CD14-positive monocyte (primary cell): ENCODE measurements at regions of chr2 and their contacts with region 1.

Region 1: GRCh38 chr2:219388127-219388844 is 574 bp upstream of the DNPEP start:
- DNase-seq: peak; percentile 92 to 98 (median 97)
- H3K4me3 ChIP-seq: peak overlapping the region in 2 of 3 experiments; percentile 15 to 60
- H3K4me3 Mint-ChIP-seq: peak overlapping the region; percentile 63 to 77
- H3K27ac ChIP-seq: peak overlapping the region in 1 of 2 donors; percentile 41
- H3K27ac Mint-ChIP-seq: peak overlapping the region; percentile 65 to 98 (median 93)
- H3K4me1 ChIP-seq: peaks cover 14 to 19% of the 10 kb centered on the region in 2 donors
- H3K4me1 Mint-ChIP-seq: peaks cover 21% of the 10 kb centered on the region
- H3K27me3 ChIP-seq: peaks cover 0 to 6% of the 10 kb centered on the region in 2 donors
- H3K27me3 Mint-ChIP-seq: peaks cover 6 to 12% (median 7%) of the 10 kb centered on the region in 3 donors
- CTCF ChIP-seq: peak; percentile 58

Region 2: GRCh38 chr2:219160186-219161017 is 227.9 kb before region 1 on chr2 and contains the start of gene NHEJ1:
- intact Hi-C with region 1: loop called in 1 of 2 experiments (anchors 5 kb)
- DNase-seq: peak; percentile 85 to 92 (median 89)
- H3K4me3 ChIP-seq: peak within 1 kb of the TSS; percentile 60 to 87 (median 80)
- H3K4me3 Mint-ChIP-seq: peak within 1 kb of the TSS; percentile 93
- H3K27ac ChIP-seq: peak within 1 kb of the TSS; percentile 71 to 81
- H3K27ac Mint-ChIP-seq: peak within 1 kb of the TSS; percentile 87 to 97 (median 95)
- H3K4me1 ChIP-seq: peaks cover 15 to 18% of the 10 kb centered on the region in 2 donors
- H3K4me1 Mint-ChIP-seq: peaks cover 17% of the 10 kb centered on the region
- H3K27me3 ChIP-seq: no peaks in the 10 kb centered on the region
- H3K27me3 Mint-ChIP-seq: peaks cover 0 to 5% (median 2%) of the 10 kb centered on the region in 3 donors
- CTCF ChIP-seq: peak; percentile 99
- polyA plus RNA-seq, gene NHEJ1: 12.6 to 20.9 (median 20.3) TPM

Region 3: DNA sequence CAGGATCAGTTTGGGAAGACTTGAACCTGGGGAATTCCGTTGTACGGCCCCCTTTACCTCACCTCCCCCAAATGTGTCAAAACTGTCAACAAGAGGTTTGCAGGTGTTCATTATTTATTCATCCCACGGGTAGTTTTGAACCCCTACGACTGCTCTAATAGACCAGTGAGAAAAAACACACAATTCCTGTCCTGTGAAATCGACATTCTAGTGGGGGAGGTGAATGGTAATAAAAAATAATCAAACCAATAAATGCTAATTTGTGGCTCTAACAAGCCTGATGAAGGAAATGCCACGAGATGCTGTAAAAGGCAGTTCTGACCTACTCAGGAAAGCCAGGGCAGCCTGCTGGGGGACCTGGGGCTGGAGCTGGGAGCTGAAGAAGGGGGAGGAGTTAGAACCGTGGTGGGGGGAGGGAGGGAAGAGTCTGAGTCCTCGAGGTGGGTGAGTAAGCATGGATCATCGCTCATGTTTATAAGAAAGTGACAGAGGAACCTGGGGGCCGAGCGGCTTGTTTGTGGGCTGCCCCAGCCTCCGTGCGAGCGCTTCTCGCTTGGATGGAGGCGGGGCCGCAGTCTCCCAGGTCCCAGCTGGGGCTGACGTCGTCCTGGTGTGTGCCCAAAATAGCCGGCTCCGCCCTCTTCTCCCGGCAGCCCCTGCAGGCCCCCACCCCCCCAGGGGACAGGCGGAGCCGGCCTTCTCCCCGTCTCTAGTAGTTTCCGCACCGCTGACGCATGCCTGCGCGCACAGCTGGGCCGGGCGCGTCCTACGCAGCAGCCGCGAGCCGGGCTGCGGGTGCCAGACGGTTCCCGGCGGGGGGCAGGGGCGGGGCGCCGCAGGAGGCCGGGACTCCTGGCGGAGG is 109.4 kb before region 1 on chr2 and contains the start of gene DNAJB2:
- intact Hi-C with region 1: loop called (anchors 2 kb)
- DNase-seq: peak; percentile 99 to 100 (median 100)
- H3K4me3 ChIP-seq: peak within 1 kb of the TSS; percentile 54 to 77 (median 57)
- H3K4me3 Mint-ChIP-seq: peak within 1 kb of the TSS; percentile 88 to 91
- H3K27ac ChIP-seq: peak within 1 kb of the TSS; percentile 85 to 97
- H3K27ac Mint-ChIP-seq: peak within 1 kb of the TSS; percentile 92 to 98 (median 97)
- H3K4me1 ChIP-seq: peaks cover 23 to 31% of the 10 kb centered on the region in 2 donors
- H3K4me1 Mint-ChIP-seq: peaks cover 29% of the 10 kb centered on the region
- H3K27me3 ChIP-seq: no peaks in the 10 kb centered on the region
- H3K27me3 Mint-ChIP-seq: peaks cover 2 to 7% (median 7%) of the 10 kb centered on the region in 3 donors
- CTCF ChIP-seq: no peak
- polyA plus RNA-seq, gene DNAJB2: 1.7 to 55.4 (median 1.9) TPM

Region 4: GRCh38 chr2:219498280-219499057 is 110.2 kb after region 1 on chr2 and contains the start of gene GMPPA:
- intact Hi-C with region 1: loop called (anchors 5 kb)
- DNase-seq: peak; percentile 93 to 95 (median 94)
- H3K4me3 ChIP-seq: peak within 1 kb of the TSS; percentile 58 to 93 (median 80)
- H3K4me3 Mint-ChIP-seq: peak within 1 kb of the TSS; percentile 98 to 100
- H3K27ac ChIP-seq: peak within 1 kb of the TSS; percentile 89 to 90
- H3K27ac Mint-ChIP-seq: peak within 1 kb of the TSS; percentile 94 to 99 (median 97)
- H3K4me1 ChIP-seq: peaks cover 28 to 43% of the 10 kb centered on the region in 2 donors
- H3K4me1 Mint-ChIP-seq: peaks cover 38% of the 10 kb centered on the region
- H3K27me3 ChIP-seq: peaks cover 31 to 42% of the 10 kb centered on the region in 2 donors
- H3K27me3 Mint-ChIP-seq: peaks cover 42 to 46% (median 43%) of the 10 kb centered on the region in 3 donors
- CTCF ChIP-seq: no peak
- polyA plus RNA-seq, gene GMPPA: 35.5 to 71.2 (median 35.9) TPM

Region 5: DNA sequence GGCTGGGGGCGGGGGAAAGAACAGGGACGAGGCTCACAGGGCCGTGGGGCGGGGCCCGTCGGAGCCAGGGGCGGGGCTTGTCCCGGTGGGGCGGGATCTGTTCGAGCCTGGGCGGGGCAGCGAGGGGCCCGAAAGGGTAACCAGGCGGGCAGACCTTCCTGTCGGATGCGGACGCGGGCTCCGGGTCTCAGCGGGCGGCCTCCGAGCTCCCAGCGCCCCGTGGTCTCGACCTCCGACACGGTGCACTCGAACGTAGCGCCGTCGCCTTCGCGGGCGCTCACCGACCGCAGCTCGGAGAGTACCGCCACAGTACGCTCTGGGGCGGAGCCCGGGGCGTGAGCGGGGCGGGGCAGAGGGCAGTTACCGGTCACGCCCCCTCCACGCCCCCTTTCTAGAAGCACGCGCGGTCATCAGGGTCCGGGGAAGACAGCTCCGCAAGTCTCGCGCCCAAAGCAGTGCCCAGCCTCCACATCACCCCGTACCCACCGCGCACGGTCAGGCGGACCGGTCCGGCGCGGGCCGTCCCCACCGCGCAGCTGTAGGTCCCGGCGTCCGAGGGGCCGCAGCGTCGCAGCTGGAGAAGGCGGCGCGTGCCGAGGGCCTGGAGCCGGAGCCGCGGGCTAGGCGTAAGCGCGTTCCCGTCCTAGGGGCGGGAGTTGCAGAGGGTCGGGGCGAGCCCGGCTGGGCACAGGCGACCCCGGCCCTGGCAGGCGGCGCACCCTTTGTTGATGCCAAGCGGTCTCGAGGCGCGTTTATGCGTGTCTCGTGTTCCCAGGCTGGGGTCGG is 164.3 kb after region 1 on chr2:
- intact Hi-C with region 1: no loop called
- DNase-seq: peak; percentile 69 to 75 (median 73)
- H3K4me3 ChIP-seq: peak overlapping the region; percentile 30 to 71 (median 30)
- H3K4me3 Mint-ChIP-seq: peak overlapping the region; percentile 67 to 81
- H3K27ac ChIP-seq: no peak overlapping the region
- H3K27ac Mint-ChIP-seq: peak overlapping the region in 1 of 7 donors; percentile 21
- H3K4me1 ChIP-seq: peaks cover 12 to 18% of the 10 kb centered on the region in 2 donors
- H3K4me1 Mint-ChIP-seq: peaks cover 8% of the 10 kb centered on the region
- H3K27me3 ChIP-seq: peaks cover 17 to 44% of the 10 kb centered on the region in 2 donors
- H3K27me3 Mint-ChIP-seq: peaks cover 35 to 57% (median 46%) of the 10 kb centered on the region in 3 donors
- CTCF ChIP-seq: no peak

Region 6: GRCh38 chr2:219597552-219598307 is 209.4 kb after region 1 on chr2 and contains the start of gene STK11IP:
- intact Hi-C with region 1: loop called in 1 of 2 experiments (anchors 5 kb)
- DNase-seq: peak; percentile 96 to 97 (median 97)
- H3K4me3 ChIP-seq: peak within 1 kb of the TSS; percentile 65 to 81 (median 80)
- H3K4me3 Mint-ChIP-seq: peak within 1 kb of the TSS; percentile 95 to 96
- H3K27ac ChIP-seq: peak within 1 kb of the TSS; percentile 69 to 91
- H3K27ac Mint-ChIP-seq: peak within 1 kb of the TSS; percentile 94 to 99 (median 97)
- H3K4me1 ChIP-seq: peaks cover 11 to 16% of the 10 kb centered on the region in 2 donors
- H3K4me1 Mint-ChIP-seq: peaks cover 22% of the 10 kb centered on the region
- H3K27me3 ChIP-seq: no peaks in the 10 kb centered on the region
- H3K27me3 Mint-ChIP-seq: peaks cover 3 to 7% (median 4%) of the 10 kb centered on the region in 3 donors
- CTCF ChIP-seq: no peak
- polyA plus RNA-seq, gene STK11IP: 13.0 to 79.1 (median 15.7) TPM